Thyroid gland (tissue), 4 donors: ENCODE measurements at regions of chr19 and their contacts with region 1.

Region 1: DNA sequence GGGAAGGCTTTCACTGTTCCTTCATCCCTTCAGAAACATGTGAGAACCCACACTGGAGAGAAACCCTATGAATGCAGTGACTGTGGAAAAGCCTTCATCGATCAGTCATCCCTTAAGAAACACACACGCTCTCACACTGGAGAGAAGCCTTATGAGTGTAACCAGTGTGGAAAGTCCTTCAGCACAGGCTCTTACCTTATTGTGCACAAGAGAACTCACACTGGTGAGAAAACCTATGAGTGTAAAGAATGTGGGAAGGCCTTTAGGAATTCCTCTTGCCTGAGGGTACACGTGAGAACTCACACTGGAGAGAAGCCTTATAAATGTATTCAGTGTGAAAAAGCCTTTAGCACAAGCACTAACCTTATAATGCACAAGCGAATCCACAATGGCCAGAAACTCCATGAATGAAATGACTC is 18.6 kb downstream of the ZNF177 start:
- DNase-seq: no peak
- H3K4me3 ChIP-seq: no peak overlapping the region
- H3K27ac ChIP-seq: no peak overlapping the region
- H3K4me1 ChIP-seq: no peaks in the 10 kb centered on the region
- H3K27me3 ChIP-seq: no peaks in the 10 kb centered on the region
- CTCF ChIP-seq: no peak
- POLR2A ChIP-seq: no peak

Region 2: GRCh38 chr19:9043544-9043943 is 337.8 kb before region 1 on chr19:
- intact Hi-C with region 1: no loop called
- DNase-seq: no peak
- H3K4me3 ChIP-seq: no peak overlapping the region
- H3K27ac ChIP-seq: no peak overlapping the region
- H3K4me1 ChIP-seq: no peaks in the 10 kb centered on the region
- H3K27me3 ChIP-seq: no peaks in the 10 kb centered on the region
- CTCF ChIP-seq: no peak
- POLR2A ChIP-seq: no peak

Region 3: GRCh38 chr19:9342610-9343304 is 38.6 kb before region 1 on chr19:
- intact Hi-C with region 1: loop called (anchors 5 kb)
- DNase-seq: no peak
- H3K4me3 ChIP-seq: no peak overlapping the region
- H3K27ac ChIP-seq: no peak overlapping the region
- H3K4me1 ChIP-seq: no peaks in the 10 kb centered on the region
- H3K27me3 ChIP-seq: no peaks in the 10 kb centered on the region
- CTCF ChIP-seq: no peak
- POLR2A ChIP-seq: no peak

Region 4: GRCh38 chr19:9597027-9597426 is 215.7 kb after region 1 on chr19:
- intact Hi-C with region 1: no loop called
- DNase-seq: no peak
- H3K4me3 ChIP-seq: no peak overlapping the region
- H3K27ac ChIP-seq: no peak overlapping the region
- H3K4me1 ChIP-seq: no peaks in the 10 kb centered on the region
- H3K27me3 ChIP-seq: no peaks in the 10 kb centered on the region
- CTCF ChIP-seq: no peak
- POLR2A ChIP-seq: no peak